CD14-positive monocyte (primary cell): ENCODE measurements at regions of chr16 and their contacts with region 1.

Region 1: GRCh38 chr16:4116337-4117249 is at the start of gene ADCY9:
- DNase-seq: peak; percentile 66 to 86 (median 73)
- H3K4me3 ChIP-seq: peak within 1 kb of the TSS; percentile 57 to 80 (median 60)
- H3K4me3 Mint-ChIP-seq: peak within 1 kb of the TSS; percentile 79 to 94
- H3K27ac ChIP-seq: peak within 1 kb of the TSS in 1 of 2 donors; percentile 41
- H3K27ac Mint-ChIP-seq: peak within 1 kb of the TSS in 5 of 7 donors; percentile 27 to 82 (median 35)
- H3K4me1 ChIP-seq: peaks cover 41 to 46% of the 10 kb centered on the region in 2 donors
- H3K4me1 Mint-ChIP-seq: peaks cover 43% of the 10 kb centered on the region
- H3K27me3 ChIP-seq: no peaks in the 10 kb centered on the region
- H3K27me3 Mint-ChIP-seq: peaks cover 7 to 17% (median 10%) of the 10 kb centered on the region in 3 donors
- CTCF ChIP-seq: no peak
- polyA plus RNA-seq, gene ADCY9: 0.44 to 9.3 (median 0.67) TPM

Region 2: DNA sequence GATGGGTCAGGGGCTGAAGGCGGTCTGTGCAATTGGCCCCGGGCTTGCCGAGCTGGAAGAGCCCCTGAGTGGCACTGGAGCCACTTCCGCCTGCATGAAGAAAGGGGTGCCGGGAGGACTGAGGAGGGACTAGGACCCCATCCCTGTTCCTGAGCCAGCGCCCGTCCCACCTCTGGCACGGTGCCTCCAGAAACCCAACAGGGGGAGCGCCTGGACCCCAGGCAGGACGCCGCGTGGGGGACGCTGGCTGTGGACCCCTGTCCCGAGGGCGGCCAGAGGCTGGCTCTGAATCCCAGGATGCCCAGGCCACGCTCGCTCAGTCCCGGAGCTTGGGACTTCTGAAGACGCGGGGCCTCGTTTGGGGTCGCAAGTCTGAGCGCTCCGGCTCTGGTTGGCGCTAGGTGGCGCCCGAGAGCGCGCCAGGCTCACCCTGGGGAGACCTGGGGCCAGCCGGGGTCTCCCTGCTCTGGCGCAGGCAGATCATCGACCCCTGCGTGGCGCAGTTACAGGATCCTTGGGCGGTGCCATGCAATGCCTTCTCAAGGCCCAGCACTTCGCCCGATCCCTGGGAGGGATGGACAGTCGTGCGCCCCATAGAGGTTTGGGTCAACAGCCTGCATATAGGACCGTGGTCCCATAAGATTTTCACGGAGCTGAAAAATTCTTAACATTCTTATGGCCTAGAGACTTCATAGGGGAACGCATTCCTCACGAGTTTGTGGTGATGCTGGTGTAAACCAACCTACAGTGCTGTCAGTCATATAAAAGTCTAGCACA is 177.6 kb before region 1 on chr16:
- intact Hi-C with region 1: loop called in 1 of 2 experiments (anchors 10 kb)
- DNase-seq: peak; percentile 33 to 61 (median 51)
- H3K4me3 ChIP-seq: peak overlapping the region in 2 of 3 experiments; percentile 35 to 53
- H3K4me3 Mint-ChIP-seq: peak overlapping the region; percentile 63 to 74
- H3K27ac ChIP-seq: no peak overlapping the region
- H3K27ac Mint-ChIP-seq: no peak overlapping the region
- H3K4me1 ChIP-seq: peaks cover 8 to 11% of the 10 kb centered on the region in 2 donors
- H3K4me1 Mint-ChIP-seq: peaks cover 6% of the 10 kb centered on the region
- H3K27me3 ChIP-seq: peaks cover 0 to 7% of the 10 kb centered on the region in 2 donors
- H3K27me3 Mint-ChIP-seq: peaks cover 11 to 22% (median 12%) of the 10 kb centered on the region in 3 donors
- CTCF ChIP-seq: peak; percentile 100